ENCODE measurements at regions of chr1 and their contacts with region 1.

Region 1: DNA sequence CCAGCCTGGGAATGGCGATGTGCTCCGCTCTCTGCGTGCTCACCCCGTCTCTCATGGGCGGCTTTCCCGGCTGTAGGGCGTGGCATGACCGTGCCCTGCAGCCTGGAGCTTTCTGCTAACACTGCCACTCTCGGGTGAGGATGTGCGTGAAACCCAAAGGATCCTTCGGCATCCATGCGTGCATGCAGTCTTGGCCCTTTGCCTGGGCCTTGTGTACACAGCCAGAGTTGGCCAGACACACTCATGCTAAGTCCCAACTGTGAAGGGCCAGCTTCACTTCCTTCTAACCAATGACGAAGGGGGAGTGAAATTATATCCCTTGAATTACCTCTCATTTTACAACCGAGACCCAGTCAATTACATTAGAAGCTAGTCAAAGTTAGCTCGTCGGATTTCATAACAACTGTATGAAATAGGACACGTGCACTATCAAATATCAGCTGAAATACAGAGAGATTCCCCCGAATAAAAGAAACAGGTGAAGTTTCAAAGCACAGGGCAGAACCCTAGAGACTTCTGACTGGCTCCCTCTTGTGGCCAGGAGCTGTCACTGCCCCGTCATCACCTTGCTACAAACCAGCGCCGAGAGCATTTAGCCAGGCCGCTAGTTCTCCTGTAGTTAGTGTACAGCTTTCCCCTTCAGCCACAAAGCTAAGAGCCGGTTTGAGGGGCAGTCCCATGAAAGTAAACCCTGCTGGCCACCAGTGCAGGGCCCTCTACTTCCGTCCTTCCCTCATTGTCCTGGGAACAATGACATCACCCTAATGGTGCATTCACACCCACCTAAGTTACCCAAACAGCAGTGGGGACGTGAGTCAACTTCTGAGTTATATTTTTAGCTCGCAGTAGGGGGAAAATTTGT is 63.4 kb upstream of the COA6 start:
- DNase-seq: peak; percentile 59
- H3K4me3 Mint-ChIP-seq: peak overlapping the region; percentile 0
- H3K27ac Mint-ChIP-seq: peak overlapping the region; percentile 46
- H3K4me1 Mint-ChIP-seq: peaks cover 22% of the 10 kb centered on the region
- H3K27me3 Mint-ChIP-seq: peaks cover 11% of the 10 kb centered on the region

Region 2: GRCh38 chr1:234114648-234115307 is 195.1 kb before region 1 on chr1:
- intact Hi-C with region 1: loop called (anchors 1 kb)
- DNase-seq: no peak
- H3K4me3 Mint-ChIP-seq: peak overlapping the region; percentile 43
- H3K27ac Mint-ChIP-seq: no peak overlapping the region
- H3K4me1 Mint-ChIP-seq: peaks cover 8% of the 10 kb centered on the region
- H3K27me3 Mint-ChIP-seq: peaks cover 18% of the 10 kb centered on the region

Region 3: GRCh38 chr1:234154320-234155251 is 155.2 kb before region 1 on chr1:
- intact Hi-C with region 1: loop called (anchors 1 kb)
- DNase-seq: no peak
- H3K4me3 Mint-ChIP-seq: no peak overlapping the region
- H3K27ac Mint-ChIP-seq: no peak overlapping the region
- H3K4me1 Mint-ChIP-seq: peaks cover 2% of the 10 kb centered on the region
- H3K27me3 Mint-ChIP-seq: peaks cover 6% of the 10 kb centered on the region

Region 4: DNA sequence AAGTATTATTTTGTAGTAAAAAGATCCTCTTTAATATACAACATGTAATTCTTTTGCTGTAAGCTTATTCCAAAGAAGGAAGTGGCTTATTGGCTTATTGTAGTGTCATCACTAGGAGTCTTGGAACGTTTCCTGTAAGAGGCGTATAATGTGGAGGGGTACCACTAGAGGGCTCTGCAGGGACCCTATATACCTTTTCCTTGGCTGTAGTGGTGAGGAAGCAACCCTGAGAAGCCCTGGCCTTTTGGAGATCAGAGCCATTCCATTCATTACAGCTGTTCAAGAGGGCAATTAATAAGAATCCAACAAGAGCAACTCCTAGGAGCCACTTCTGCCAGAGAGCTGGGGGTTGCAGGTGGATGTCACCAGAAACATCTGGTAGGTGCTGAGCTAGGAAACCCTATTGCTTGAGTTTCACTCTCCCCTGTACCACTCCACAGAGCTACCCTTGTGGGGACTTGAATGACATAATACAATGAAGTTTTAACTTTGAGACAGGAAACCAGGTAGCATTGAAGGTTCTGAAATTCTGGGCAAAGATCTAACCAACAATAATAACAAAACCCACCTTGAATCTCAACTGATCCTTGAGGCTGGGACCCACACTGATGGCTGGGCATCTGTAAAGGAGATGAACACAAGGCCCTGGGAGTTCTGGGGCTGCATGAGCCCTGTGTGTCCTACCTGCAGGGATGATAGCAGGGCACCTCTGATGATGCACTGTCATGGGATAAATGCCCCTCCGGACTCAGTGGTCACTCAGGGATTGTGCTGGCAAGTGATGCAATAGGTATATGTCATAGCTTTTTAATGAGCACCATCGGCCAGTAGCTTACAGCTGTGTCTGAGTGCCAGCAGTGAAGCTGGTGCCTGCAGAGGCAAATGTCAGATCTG is 96.8 kb before region 1 on chr1:
- intact Hi-C with region 1: loop called (anchors 1 kb)
- DNase-seq: no peak
- H3K4me3 Mint-ChIP-seq: peak overlapping the region; percentile 38
- H3K27ac Mint-ChIP-seq: no peak overlapping the region
- H3K4me1 Mint-ChIP-seq: peaks cover 19% of the 10 kb centered on the region
- H3K27me3 Mint-ChIP-seq: peaks cover 43% of the 10 kb centered on the region

Region 5: GRCh38 chr1:234271243-234271606 is 38.6 kb before region 1 on chr1:
- intact Hi-C with region 1: loop called (anchors 1 kb)
- DNase-seq: no peak
- H3K4me3 Mint-ChIP-seq: no peak overlapping the region
- H3K27ac Mint-ChIP-seq: no peak overlapping the region
- H3K4me1 Mint-ChIP-seq: peaks cover 28% of the 10 kb centered on the region
- H3K27me3 Mint-ChIP-seq: peaks cover 20% of the 10 kb centered on the region